Aorta (tissue), 5 donors: ENCODE measurements at regions of chrX and their contacts with region 1.

Region 1: GRCh38 chrX:123833387-123833786 is 26.5 kb upstream of the XIAP start:
- DNase-seq: no peak
- ATAC-seq: no peak
- H3K4me3 ChIP-seq: no peak overlapping the region
- H3K27ac ChIP-seq: no peak overlapping the region
- H3K4me1 ChIP-seq: no peaks in the 10 kb centered on the region
- H3K27me3 ChIP-seq: no peaks in the 10 kb centered on the region

Region 2: GRCh38 chrX:123859846-123860838 is 26.8 kb after region 1 on chrX and contains the start of gene XIAP:
- intact Hi-C with region 1: no loop called
- DNase-seq: peak; percentile 87 to 91
- ATAC-seq: peak; percentile 94
- H3K4me3 ChIP-seq: peak within 1 kb of the TSS; percentile 43 to 96
- H3K27ac ChIP-seq: peak within 1 kb of the TSS; percentile 70 to 95
- H3K4me1 ChIP-seq: no peaks in the 10 kb centered on the region
- H3K27me3 ChIP-seq: no peaks in the 10 kb centered on the region
- total RNA-seq, gene XIAP: 50.4 to 50.7 TPM

Region 3: DNA sequence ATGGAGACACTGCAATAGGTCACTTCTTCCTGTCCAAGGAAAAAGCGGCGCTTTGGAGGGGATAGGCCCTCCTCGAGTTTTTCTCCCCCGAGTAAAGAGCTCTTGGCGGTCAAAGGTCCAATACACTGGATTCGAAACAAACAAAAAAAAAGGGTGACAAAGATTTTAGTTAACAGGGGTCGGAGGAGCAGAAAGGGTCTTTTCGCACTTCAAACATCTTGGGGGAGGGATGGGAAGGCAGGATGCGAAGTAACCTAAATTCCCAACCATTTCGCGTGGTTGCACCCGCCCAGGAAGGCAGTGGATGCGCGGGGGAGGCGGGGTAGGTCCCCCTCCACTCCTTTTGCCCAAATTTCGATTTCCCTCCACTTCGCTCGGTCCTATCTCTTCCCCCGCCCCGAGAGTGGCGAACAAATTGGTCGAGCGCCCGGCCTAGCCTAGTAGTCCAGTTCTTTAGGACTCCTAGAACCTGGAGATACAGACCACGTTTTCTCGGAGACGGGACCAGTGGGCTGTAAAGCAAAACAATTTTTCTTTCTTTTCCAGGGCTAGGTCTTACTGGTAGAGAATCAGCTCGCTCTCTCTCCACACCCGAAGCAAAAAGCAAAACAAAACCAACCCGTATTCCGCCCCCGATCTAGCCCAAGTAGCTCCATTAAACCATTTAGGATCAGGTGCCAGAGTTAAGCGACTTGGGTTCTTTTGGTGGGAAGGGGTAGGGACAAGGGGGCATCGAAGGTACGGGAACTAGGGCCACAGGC is 126.1 kb after region 1 on chrX:
- intact Hi-C with region 1: loop called in 1 of 2 experiments (anchors 10 kb)
- DNase-seq: peak; percentile 63 to 86
- ATAC-seq: peak; percentile 31
- H3K4me3 ChIP-seq: peak overlapping the region; percentile 48 to 96
- H3K27ac ChIP-seq: peak overlapping the region in 1 of 2 donors; percentile 61
- H3K4me1 ChIP-seq: no peaks in the 10 kb centered on the region
- H3K27me3 ChIP-seq: no peaks in the 10 kb centered on the region